K562 (cell line): ENCODE measurements at regions of chr5 and their contacts with region 1.

Region 1: GRCh38 chr5:172770675-172771438 is at the start of gene DUSP1:
- DNase-seq: peak; percentile 97 to 99 (median 98)
- ATAC-seq: peak; percentile 82
- H3K4me3 ChIP-seq: peak within 1 kb of the TSS; percentile 84
- H3K27ac ChIP-seq: peak within 1 kb of the TSS; percentile 99
- H3K4me1 ChIP-seq: peaks cover 46 to 58% of the 10 kb centered on the region in 2 experiments
- H3K27me3 ChIP-seq: no peaks in the 10 kb centered on the region
- CTCF ChIP-seq: peak; percentile 72 to 98 (median 89)
- EP300 ChIP-seq: 0 out of 2 replicates have a peak, but pooled peaks have one; percentile 10
- POLR2A ChIP-seq: peak; percentile 99
- RAD21 ChIP-seq: peak; percentile 80 to 86
- polyA plus RNA-seq, gene DUSP1: 2.1 to 3.0 TPM

Region 2: GRCh38 chr5:172666251-172666650 is 104.6 kb before region 1 on chr5:
- CTCF ChIA-PET with region 1: no interaction called
- POLR2A ChIA-PET with region 1: no interaction called
- in situ Hi-C with region 1: no loop called
- intact Hi-C with region 1: no loop called
- DNase-seq: peak; percentile 42 to 60 (median 56)
- ATAC-seq: peak; percentile 95
- H3K4me3 ChIP-seq: no peak overlapping the region
- H3K27ac ChIP-seq: no peak overlapping the region
- H3K4me1 ChIP-seq: peaks cover 0 to 7% of the 10 kb centered on the region in 2 experiments; a peak in 1 of 5 replicates
- H3K27me3 ChIP-seq: peaks cover 18 to 68% of the 10 kb centered on the region in 2 experiments
- CTCF ChIP-seq: peak; percentile 45 to 63 (median 57)
- EP300 ChIP-seq: no peak
- POLR2A ChIP-seq: no peak
- RAD21 ChIP-seq: peak in 1 of 2 experiments; percentile 65; a peak in 2 of 4 replicates

Region 3: GRCh38 chr5:172714491-172715421 is 56.1 kb before region 1 on chr5:
- CTCF ChIA-PET with region 1: interaction called, 24 read pairs
- POLR2A ChIA-PET with region 1: interaction called, 13 read pairs
- in situ Hi-C with region 1: no loop called
- intact Hi-C with region 1: loop called (anchors 1 kb)
- DNase-seq: peak; percentile 72 to 79 (median 74)
- ATAC-seq: peak; percentile 87
- H3K4me3 ChIP-seq: no peak overlapping the region
- H3K27ac ChIP-seq: no peak overlapping the region
- H3K4me1 ChIP-seq: peaks cover 2 to 6% of the 10 kb centered on the region in 2 experiments; a peak in 2 of 5 replicates
- H3K27me3 ChIP-seq: peaks cover 0 to 16% of the 10 kb centered on the region in 2 experiments; a peak in 3 of 5 replicates
- CTCF ChIP-seq: peak; percentile 74 to 91 (median 84)
- EP300 ChIP-seq: no peak
- POLR2A ChIP-seq: no peak
- RAD21 ChIP-seq: peak; percentile 39 to 64

Region 4: GRCh38 chr5:172758083-172758833 is 12.6 kb before region 1 on chr5:
- CTCF ChIA-PET with region 1: no interaction called
- POLR2A ChIA-PET with region 1: interaction called, 55 read pairs
- in situ Hi-C with region 1: no loop called
- intact Hi-C with region 1: no loop called
- DNase-seq: peak; percentile 33 to 66 (median 50)
- ATAC-seq: peak; percentile 88
- H3K4me3 ChIP-seq: no peak overlapping the region
- H3K27ac ChIP-seq: no peak overlapping the region
- H3K4me1 ChIP-seq: peaks cover 7 to 10% of the 10 kb centered on the region in 2 experiments; a peak in 3 of 5 replicates
- H3K27me3 ChIP-seq: peaks cover 13 to 19% of the 10 kb centered on the region in 2 experiments; a peak in 4 of 5 replicates
- CTCF ChIP-seq: no peak
- EP300 ChIP-seq: no peak; the same call in 1 of the 2 replicates
- POLR2A ChIP-seq: no peak
- RAD21 ChIP-seq: no peak

Region 5: GRCh38 chr5:172800088-172800551 is 29.3 kb after region 1 on chr5:
- CTCF ChIA-PET with region 1: no interaction called
- POLR2A ChIA-PET with region 1: interaction called, 21 read pairs
- in situ Hi-C with region 1: no loop called
- intact Hi-C with region 1: loop called (anchors 2 kb)
- DNase-seq: no peak
- ATAC-seq: peak; percentile 19; the same call in 2 of the 3 replicates
- H3K4me3 ChIP-seq: no peak overlapping the region
- H3K27ac ChIP-seq: peak overlapping the region; percentile 47; the same call in 2 of the 3 replicates
- H3K4me1 ChIP-seq: peaks cover 41 to 46% of the 10 kb centered on the region in 2 experiments; a peak in 4 of 5 replicates
- H3K27me3 ChIP-seq: no peaks in the 10 kb centered on the region
- CTCF ChIP-seq: no peak
- EP300 ChIP-seq: no peak
- POLR2A ChIP-seq: no peak
- RAD21 ChIP-seq: no peak

Region 6: DNA sequence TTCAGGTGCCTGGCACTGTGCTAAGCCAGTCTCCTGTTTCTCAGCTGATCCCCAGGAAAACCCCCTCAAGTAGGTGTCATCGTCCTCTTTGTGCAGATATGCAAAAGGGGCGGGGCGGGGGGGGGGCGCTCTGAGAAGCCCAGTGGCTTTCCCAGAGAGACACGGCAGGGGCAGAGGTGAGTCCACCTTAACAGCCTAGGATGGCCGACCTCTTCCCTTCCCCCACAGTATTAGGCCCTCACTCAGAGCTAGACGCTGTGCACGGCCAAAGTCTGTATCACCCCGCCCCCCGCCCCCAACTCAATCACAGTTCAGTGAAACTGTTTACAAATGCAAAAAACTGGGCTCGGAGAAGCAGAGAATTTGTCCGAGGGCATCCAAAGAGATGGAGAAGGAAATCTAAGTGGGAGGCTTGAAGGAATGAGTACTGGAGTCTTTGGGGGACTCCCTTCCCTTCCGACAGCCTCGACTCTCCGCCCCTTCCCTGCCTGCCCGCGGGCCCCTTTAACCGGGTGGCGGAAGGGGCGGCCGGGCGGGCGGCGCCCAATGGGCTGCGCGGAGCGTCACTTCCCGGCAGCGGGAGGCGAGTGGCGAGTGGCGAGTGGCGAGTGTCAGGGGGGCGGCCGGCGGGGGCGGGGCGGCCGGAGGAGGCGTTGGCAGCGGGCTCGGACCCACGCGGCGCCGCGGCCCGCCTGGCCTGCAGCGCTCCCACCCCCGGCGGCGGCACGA is 63.0 kb after region 1 on chr5 and contains the start of gene ERGIC1:
- CTCF ChIA-PET with region 1: interaction called, 6 read pairs
- POLR2A ChIA-PET with region 1: interaction called, 17 read pairs
- in situ Hi-C with region 1: no loop called
- intact Hi-C with region 1: loop called (anchors 1 kb)
- DNase-seq: peak; percentile 88 to 96 (median 92)
- ATAC-seq: peak; percentile 96
- H3K4me3 ChIP-seq: peak within 1 kb of the TSS; percentile 71
- H3K27ac ChIP-seq: peak within 1 kb of the TSS; percentile 70
- H3K4me1 ChIP-seq: peaks cover 12 to 33% of the 10 kb centered on the region in 2 experiments
- H3K27me3 ChIP-seq: no peaks in the 10 kb centered on the region
- CTCF ChIP-seq: peak in 1 of 3 experiments; percentile 12; a peak in 1 of 6 replicates
- EP300 ChIP-seq: no peak
- POLR2A ChIP-seq: peak; percentile 62
- RAD21 ChIP-seq: no peak
- polyA plus RNA-seq, gene ERGIC1: 5.5 to 11.7 TPM

Region 7: GRCh38 chr5:172932313-172933017 is 161.6 kb after region 1 on chr5:
- CTCF ChIA-PET with region 1: interaction called, 3 read pairs
- POLR2A ChIA-PET with region 1: interaction called, 18 read pairs
- in situ Hi-C with region 1: no loop called
- intact Hi-C with region 1: no loop called
- DNase-seq: peak; percentile 75 to 83 (median 80)
- ATAC-seq: peak; percentile 98
- H3K4me3 ChIP-seq: no peak overlapping the region
- H3K27ac ChIP-seq: no peak overlapping the region
- H3K4me1 ChIP-seq: peaks cover 0 to 5% of the 10 kb centered on the region in 2 experiments; a peak in 1 of 5 replicates
- H3K27me3 ChIP-seq: no peaks in the 10 kb centered on the region
- CTCF ChIP-seq: peak; percentile 91 to 94 (median 92)
- EP300 ChIP-seq: 0 out of 2 replicates have a peak, but pooled peaks have one; percentile 4
- POLR2A ChIP-seq: no peak
- RAD21 ChIP-seq: peak; percentile 89 to 97

Region 8: DNA sequence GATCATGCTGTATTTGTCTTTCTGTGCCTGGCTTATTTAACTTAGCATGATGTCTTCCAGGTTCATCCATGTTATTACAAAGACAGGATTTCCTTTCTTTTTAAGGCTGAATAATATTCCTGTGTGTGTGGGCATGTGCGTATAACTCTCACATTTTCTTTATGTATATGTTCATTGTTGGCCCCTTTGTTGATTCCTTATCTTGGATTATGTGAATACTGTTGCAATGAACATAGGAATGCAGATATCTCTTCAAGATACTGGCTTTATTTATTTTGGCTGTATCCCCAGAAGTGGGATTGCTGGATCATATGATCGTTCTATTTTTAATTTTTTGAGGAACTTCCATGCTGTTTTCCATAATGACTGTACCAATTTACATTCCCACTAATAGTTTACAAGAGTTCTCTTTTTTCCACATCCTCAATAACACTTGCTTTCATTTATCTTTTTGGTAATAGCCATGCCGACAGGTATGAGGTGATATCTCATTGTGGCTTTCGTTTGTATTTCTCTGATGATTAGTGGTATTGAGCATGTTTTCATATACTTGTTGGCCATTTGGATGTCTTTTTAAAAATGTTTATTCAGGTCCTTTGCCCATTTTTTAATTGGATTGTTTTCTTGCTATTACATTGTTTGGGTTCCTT is 323.3 kb after region 1 on chr5:
- CTCF ChIA-PET with region 1: no interaction called
- POLR2A ChIA-PET with region 1: no interaction called
- in situ Hi-C with region 1: no loop called
- intact Hi-C with region 1: no loop called
- DNase-seq: no peak
- ATAC-seq: no peak
- H3K4me3 ChIP-seq: no peak overlapping the region
- H3K27ac ChIP-seq: no peak overlapping the region
- H3K4me1 ChIP-seq: 0 out of 5 replicates have a peak, but pooled peaks cover 0 to 5% of the 10 kb centered on the region in 2 experiments
- H3K27me3 ChIP-seq: no peaks in the 10 kb centered on the region
- CTCF ChIP-seq: no peak
- EP300 ChIP-seq: no peak
- POLR2A ChIP-seq: no peak
- RAD21 ChIP-seq: no peak